Breast epithelium (tissue), 4 donors: ENCODE measurements at regions of chr1 and their contacts with region 1.

Region 1: DNA sequence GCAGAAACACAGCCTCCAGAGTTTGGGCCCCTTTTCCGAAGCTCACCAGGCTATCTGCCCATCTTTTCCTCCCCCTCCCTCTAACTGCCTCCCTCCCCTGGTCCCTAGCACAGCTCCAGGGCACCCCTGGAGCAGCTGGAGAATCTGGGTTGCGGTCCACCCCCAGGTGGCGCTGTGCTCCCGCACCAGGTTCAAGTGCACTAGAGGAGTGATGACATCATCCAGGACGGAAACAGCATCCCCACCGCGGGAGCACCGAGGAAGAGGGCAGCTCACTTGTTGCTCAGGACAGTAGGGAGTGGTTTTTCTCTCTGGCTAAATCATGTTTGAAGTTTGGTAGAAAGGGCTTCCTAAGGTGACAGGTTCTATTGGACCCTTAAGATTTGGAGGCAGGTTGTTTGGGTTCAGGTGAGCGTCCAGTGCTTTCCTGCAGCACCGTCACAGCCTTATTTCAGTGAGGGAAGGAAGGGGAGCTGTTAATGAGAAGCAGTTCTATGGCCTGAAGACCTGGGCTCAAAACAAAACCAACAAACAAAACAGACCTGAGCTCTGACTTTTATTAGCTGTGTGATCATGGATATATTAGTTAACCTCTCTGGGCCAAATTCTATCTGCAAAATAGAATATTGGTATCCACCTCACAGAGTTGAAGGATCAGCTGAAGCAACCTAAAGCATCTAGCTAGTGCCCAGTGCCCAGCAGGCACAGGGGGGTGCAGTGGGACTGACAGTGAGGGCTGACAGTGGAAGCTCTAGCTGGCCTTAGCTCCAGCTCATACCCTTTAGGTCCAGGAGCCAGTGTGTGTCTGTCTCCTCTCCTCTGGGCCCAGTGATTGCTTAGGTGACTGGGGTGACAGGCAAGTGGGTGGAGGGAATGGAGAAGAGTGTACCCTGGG is 7.5 kb downstream of the SHISA4 start:
- DNase-seq: peak; percentile 83 to 84
- H3K4me3 ChIP-seq: no peak overlapping the region
- H3K27ac ChIP-seq: peak overlapping the region; percentile 66 to 77
- H3K4me1 ChIP-seq: no peaks in the 10 kb centered on the region
- H3K27me3 ChIP-seq: no peaks in the 10 kb centered on the region
- CTCF ChIP-seq: peak; percentile 97 to 98 (median 98)
- POLR2A ChIP-seq: no peak

Region 2: DNA sequence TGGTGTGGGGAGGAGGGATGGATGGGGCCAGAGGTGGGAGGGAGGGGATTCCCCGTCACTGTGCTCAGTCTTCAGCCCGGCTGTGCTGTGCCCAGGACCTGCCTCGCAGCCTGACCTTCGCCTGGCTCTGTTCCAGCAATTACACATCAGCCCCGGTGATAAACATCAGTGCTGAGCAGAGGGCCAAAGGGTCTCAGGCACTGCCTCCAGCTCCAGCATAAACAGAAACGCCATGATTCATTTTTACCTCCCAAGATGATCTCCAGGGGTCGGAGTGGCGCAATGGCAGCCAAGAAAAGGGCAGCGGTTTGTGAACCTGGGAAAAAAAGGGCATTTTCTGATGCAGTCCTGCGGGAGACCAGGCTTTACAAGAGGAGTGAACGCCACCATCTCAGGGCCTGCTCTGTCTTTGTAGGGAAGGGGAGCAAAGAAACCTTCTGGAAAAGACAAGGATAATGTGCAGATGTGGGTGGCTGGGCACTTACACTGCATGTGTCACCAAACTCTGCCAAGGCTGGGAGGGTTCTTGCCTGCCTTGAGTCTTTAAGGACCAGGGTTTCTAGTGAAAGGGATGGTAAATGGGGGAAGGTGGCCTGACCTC is 20.6 kb after region 1 on chr1:
- intact Hi-C with region 1: no loop called
- DNase-seq: peak; percentile 62
- H3K4me3 ChIP-seq: peak overlapping the region in 1 of 3 donors; percentile 10
- H3K27ac ChIP-seq: peak overlapping the region; percentile 84 to 94
- H3K4me1 ChIP-seq: peaks cover 14 to 23% of the 10 kb centered on the region in 2 donors
- H3K27me3 ChIP-seq: no peaks in the 10 kb centered on the region
- CTCF ChIP-seq: no peak
- POLR2A ChIP-seq: no peak

Region 3: DNA sequence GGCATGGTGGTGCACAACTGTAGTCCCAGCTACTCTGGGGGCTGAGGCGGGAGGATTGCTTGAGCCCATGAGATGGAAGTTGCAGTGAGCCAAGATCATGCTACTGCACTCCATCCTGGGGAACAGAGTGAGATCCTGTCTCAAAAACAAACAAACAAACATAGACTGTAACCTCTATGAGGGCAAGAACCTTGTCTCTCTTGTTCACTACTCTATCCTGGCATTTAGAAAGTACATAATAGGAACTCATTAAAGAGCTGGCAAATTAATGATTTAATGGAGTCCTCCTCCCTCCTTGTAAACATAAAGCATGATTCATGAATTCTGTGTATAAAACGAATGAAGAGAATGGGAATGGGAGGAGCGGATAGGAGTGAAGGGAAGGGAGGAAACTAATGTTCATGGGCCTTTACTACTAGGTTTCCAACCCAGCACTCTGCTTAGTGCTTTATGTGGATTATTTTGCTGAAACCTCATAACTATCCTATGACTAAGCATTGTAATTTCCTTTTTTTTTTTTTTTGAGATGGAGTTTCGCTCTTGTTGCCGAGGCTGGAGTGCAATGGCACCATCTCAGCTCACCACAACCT is 41.6 kb after region 1 on chr1:
- intact Hi-C with region 1: no loop called
- DNase-seq: no peak
- H3K4me3 ChIP-seq: peak overlapping the region in 1 of 3 donors; percentile 21
- H3K27ac ChIP-seq: peak overlapping the region; percentile 60 to 77
- H3K4me1 ChIP-seq: peaks cover 0 to 5% of the 10 kb centered on the region in 2 donors
- H3K27me3 ChIP-seq: no peaks in the 10 kb centered on the region
- CTCF ChIP-seq: no peak
- POLR2A ChIP-seq: no peak

Region 4: DNA sequence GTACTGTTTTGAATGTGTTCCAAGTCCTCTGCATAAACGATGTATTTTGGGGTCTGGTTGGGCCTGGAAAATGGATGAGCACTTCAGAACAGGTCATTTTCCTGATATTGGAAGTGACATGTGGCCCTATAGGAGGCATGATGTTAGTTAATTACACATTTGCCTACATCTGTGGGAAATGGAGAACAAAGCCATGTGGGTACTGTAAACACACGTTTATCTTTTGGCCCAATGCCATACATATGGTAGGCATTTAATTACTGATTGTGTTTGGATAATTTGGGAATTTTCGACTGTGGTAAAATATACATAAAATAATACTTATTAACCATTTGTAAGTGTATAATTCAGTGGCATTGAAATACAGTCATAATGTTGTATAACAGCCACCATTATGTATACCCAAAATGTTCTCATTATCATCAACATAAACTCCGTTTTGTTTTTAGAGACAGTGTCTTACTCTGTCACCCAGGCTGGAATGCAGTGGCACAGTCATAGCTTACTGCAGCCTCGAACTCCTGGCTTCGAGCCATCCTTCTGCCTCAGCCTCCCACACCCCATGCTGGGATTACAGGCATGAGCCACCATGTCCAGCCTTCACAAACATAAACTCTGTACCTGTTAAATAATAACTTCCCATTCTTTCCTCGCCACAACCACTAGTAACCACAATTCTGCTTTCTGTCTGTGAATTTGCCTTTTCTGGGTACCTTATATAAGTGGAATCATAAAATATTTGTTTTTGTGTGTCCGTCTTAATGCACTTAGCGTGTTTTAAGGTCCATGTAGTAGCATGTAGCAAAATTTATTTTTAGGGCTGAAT is 74.4 kb after region 1 on chr1:
- intact Hi-C with region 1: loop called (anchors 5 kb)
- DNase-seq: peak in 1 of 2 donors; percentile 14
- H3K4me3 ChIP-seq: no peak overlapping the region
- H3K27ac ChIP-seq: no peak overlapping the region
- H3K4me1 ChIP-seq: no peaks in the 10 kb centered on the region
- H3K27me3 ChIP-seq: no peaks in the 10 kb centered on the region
- CTCF ChIP-seq: no peak
- POLR2A ChIP-seq: no peak